Activated T-helper 1 cell treated with anti-CD3 and anti-CD28 coated beads, Interleukin-12 subunit alpha, Interleukin-12 subunit beta, Interleukin-2, Interleukin-4 antibody, amounts not matched to agents 30 ng/mL and 10 ng/mL and 1 ng/mL, durations not matched to agents 14 hours and 24 hours and 36 hours (primary cell): ENCODE measurements at regions of chr6 and their contacts with region 1.

Region 1: DNA sequence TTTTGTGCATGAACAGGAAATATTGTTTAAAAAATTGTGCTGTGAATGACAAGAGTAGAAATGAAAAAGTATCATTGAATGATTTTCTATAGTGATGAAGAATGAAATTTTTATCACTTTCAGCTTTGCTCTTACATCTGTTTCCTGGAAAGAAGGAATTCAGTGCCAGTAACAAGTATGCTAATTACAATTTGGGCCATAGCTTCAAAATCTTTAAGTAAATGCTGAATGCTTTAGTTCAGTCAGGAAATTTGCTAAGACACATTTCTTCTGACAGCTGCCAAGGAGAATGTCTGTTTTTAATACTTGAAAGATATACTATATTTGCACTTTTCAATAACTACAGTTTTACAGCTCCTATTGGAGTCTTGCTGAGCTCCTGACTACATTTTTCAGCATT is 203.7 kb upstream of the RSPO3 start:
- DNase-seq: no peak
- H3K4me3 Mint-ChIP-seq: no peak overlapping the region
- H3K27ac Mint-ChIP-seq: no peak overlapping the region
- H3K4me1 Mint-ChIP-seq: no peaks in the 10 kb centered on the region
- H3K27me3 Mint-ChIP-seq: no peaks in the 10 kb centered on the region

Region 2: DNA sequence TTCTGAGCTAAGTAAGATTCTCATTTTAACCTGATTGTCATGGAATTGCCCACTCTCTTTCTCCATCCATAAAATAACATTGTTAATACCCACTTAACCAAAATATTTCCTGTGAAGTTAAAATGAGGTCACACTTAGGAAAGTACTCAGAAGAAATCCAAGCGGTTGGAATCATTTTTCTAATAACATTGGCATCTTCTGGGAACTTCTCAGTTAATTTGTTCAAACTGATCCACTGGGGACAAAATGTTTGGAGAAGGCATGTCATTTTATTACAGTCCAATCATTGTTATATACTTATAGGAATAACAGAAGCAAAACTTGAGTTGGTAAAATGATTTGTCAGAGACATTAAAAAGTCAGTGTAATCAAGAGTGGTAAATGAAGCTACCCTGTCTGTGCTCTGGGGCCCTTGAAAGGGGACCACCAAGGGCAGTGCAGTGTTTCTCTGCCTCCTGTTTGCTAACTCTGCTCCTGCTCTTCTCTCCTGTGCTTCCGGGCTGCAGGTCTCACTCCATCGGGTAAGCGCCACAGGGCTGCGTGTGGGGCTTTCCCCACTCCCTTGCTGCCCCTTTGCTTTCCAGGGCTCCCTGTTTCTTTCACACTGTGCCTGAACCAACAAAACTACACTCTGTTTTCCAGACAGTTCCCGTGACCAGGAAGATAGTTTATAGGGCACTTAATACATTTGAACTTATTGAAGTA is 1663.1 kb before region 1 on chr6:
- intact Hi-C with region 1: loop called (anchors 5 kb)
- DNase-seq: no peak
- H3K4me3 Mint-ChIP-seq: peak overlapping the region; percentile 20
- H3K27ac Mint-ChIP-seq: no peak overlapping the region
- H3K4me1 Mint-ChIP-seq: peaks cover 4% of the 10 kb centered on the region
- H3K27me3 Mint-ChIP-seq: peaks cover 2% of the 10 kb centered on the region